HCT116 (cell line): ENCODE measurements at regions of chr9 and their contacts with region 1.

Region 1: DNA sequence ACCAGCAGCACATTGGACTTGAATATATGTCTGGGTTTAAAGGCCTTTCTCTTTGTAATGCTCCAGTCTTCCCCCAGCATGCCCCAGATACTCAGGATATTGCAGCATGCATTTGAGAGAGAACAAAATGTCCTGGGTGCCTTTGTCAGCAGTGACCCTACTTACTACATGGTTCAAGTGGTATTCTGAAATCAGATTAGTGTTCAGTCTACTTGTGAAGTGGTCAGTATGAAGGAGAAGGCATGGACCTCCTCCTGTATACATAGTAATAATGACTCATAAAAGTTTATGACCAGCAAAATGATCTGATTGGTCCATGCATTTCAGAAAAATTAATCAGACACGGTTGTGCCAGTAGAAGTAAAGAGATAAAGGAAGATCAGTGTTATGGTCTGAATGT is 25.4 kb downstream of the GPR21 start:
- DNase-seq: no peak
- ATAC-seq: no peak
- H3K4me3 ChIP-seq: no peak overlapping the region
- H3K27ac ChIP-seq: no peak overlapping the region
- H3K4me1 ChIP-seq: no peaks in the 10 kb centered on the region
- H3K27me3 ChIP-seq: no peaks in the 10 kb centered on the region
- CTCF ChIP-seq: no peak
- POLR2A ChIP-seq: no peak
- RAD21 ChIP-seq: no peak

Region 2: DNA sequence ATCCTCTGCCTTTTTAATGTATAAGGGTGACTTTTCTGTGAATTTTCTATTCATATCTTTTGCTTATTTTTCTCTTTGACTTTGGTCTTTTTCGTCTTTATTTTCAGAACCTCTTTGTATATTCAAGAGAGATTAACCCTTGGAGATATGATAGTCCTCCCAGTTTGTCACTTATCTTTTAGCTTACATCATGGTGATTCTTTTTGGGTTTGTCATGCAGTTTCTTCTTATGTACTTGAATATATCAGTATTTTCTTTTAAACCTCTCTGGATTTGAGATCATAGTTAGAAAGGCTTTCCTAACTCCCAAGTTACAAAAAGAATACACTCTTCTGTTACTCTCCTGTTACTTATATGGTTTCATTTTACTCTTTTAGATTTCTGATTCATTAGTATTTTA is 52.9 kb before region 1 on chr9:
- CTCF ChIA-PET with region 1: no interaction called
- POLR2A ChIA-PET with region 1: no interaction called
- RAD21 ChIA-PET with region 1: no interaction called
- intact Hi-C with region 1: loop called (anchors 5 kb)
- DNase-seq: no peak
- ATAC-seq: no peak
- H3K4me3 ChIP-seq: no peak overlapping the region
- H3K27ac ChIP-seq: no peak overlapping the region
- H3K4me1 ChIP-seq: no peaks in the 10 kb centered on the region
- H3K27me3 ChIP-seq: no peaks in the 10 kb centered on the region
- CTCF ChIP-seq: no peak
- POLR2A ChIP-seq: no peak
- RAD21 ChIP-seq: no peak

Region 3: GRCh38 chr9:123033864-123034601 is 24.8 kb before region 1 on chr9:
- CTCF ChIA-PET with region 1: no interaction called
- POLR2A ChIA-PET with region 1: no interaction called
- RAD21 ChIA-PET with region 1: no interaction called
- intact Hi-C with region 1: no loop called
- DNase-seq: no peak
- ATAC-seq: no peak
- H3K4me3 ChIP-seq: no peak overlapping the region
- H3K27ac ChIP-seq: no peak overlapping the region
- H3K4me1 ChIP-seq: no peaks in the 10 kb centered on the region
- H3K27me3 ChIP-seq: no peaks in the 10 kb centered on the region
- CTCF ChIP-seq: no peak
- POLR2A ChIP-seq: no peak
- RAD21 ChIP-seq: no peak